ENCODE measurements at regions of chr5 and their contacts with region 1.

Region 1: DNA sequence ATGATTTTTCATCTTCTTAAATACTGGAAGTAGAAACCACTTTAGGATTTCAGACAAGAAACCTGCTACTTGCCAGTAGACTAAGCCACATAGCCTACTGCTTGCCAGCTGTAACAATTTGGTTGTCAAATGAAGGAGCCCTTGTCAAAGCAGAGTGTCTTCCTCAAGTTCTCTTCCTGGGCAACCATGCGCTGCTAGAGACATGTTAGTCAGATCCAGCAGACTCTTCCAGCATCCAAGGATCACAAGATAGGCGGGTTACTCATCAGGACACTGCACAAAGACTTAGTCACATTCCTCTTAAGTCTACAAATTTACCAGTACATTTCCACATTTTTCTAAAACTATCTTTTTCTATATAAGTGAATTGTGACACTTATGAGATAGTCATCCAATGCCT is 24.4 kb downstream of the SKIC3 start:
- DNase-seq: no peak
- ATAC-seq: no peak
- H3K4me3 ChIP-seq: no peak overlapping the region
- H3K27ac ChIP-seq: no peak overlapping the region
- H3K4me1 ChIP-seq: peaks cover 0 to 14% (median 0%) of the 10 kb centered on the region in 9 donors
- H3K27me3 ChIP-seq: no peaks in the 10 kb centered on the region
- CTCF ChIP-seq: no peak

Region 2: DNA sequence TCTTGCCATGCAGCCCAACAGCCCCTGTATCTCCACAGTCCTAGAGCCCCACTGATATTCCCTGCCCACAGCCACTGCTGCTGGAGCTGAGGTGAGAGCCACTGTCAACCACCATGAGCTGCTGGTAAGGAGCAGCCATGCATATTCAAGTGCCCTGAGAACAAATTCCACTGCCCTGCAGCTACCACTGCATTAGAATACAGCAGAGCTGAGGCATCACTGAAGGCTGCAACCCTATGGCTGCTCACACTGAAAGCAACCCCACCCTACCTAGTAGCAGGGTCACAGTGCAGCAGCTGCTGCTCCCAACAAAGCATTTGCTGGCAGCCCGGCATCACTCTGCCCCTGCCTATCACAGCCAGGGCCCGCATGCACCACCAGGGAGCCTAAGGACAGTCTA is 44.2 kb before region 1 on chr5:
- intact Hi-C with region 1: loop called in 1 of 10 experiments (anchors 5 kb)
- DNase-seq: no peak
- ATAC-seq: no peak
- H3K4me3 ChIP-seq: no peak overlapping the region
- H3K27ac ChIP-seq: no peak overlapping the region
- H3K4me1 ChIP-seq: no peaks in the 10 kb centered on the region
- H3K27me3 ChIP-seq: no peaks in the 10 kb centered on the region
- CTCF ChIP-seq: no peak

Region 3: DNA sequence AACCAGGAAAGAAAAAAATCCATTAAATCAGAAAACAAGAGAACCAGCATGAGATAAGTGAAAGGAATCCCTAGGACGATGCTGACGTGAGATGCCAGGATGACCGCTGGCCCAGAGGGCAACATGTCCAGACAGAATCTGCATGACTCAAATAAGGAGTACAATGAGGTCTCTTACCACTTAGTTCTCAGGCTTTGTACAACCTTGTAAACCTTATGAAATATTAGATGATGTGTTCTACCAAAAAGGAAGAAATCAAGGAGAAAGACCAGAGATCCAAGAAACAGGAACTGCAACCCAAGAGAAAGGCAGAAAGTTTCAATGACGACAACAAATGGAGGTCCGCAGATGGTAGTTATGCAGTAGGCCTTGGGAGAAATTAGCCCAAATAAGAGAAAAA is 86.6 kb after region 1 on chr5:
- intact Hi-C with region 1: no loop called
- DNase-seq: no peak
- ATAC-seq: no peak
- H3K4me3 ChIP-seq: no peak overlapping the region
- H3K27ac ChIP-seq: no peak overlapping the region
- H3K4me1 ChIP-seq: peaks cover 0 to 26% (median 20%) of the 10 kb centered on the region in 9 donors
- H3K27me3 ChIP-seq: peaks cover 0 to 11% (median 0%) of the 10 kb centered on the region in 7 donors
- CTCF ChIP-seq: no peak

Measured in heart right ventricle (tissue), 16 donors.